Colonic mucosa (tissue), 4 donors: ENCODE measurements at regions of chr7 and their contacts with region 1.

Region 1: GRCh38 chr7:33932832-33933468 is 27.6 kb downstream of the BMPER start:
- DNase-seq: peak; percentile 78
- H3K4me3 ChIP-seq: no peak overlapping the region
- H3K27ac ChIP-seq: no peak overlapping the region
- H3K4me1 ChIP-seq: no peaks in the 10 kb centered on the region
- H3K27me3 ChIP-seq: no peaks in the 10 kb centered on the region
- CTCF ChIP-seq: peak; percentile 84

Region 2: DNA sequence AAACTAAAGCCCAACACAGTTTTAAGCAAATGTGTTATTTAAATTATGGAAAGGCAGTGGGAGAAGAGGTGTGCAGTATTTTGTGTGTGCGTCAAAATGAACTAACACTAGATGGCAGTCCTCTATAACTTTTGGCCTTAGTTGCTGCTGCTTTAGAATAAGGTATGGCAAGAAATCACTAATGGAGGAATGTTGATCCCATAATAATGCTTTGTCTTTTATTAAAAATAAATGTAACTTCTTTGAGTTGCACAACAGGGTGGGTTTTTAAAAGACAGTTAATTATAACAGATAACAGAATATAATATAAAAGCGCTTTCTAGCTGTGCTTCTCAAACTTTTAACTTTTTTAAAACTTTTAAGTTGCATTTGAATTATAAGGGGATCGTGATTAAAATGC is 747.2 kb before region 1 on chr7:
- intact Hi-C with region 1: loop called (anchors 10 kb)
- DNase-seq: no peak
- H3K4me3 ChIP-seq: no peak overlapping the region
- H3K27ac ChIP-seq: no peak overlapping the region
- H3K4me1 ChIP-seq: no peaks in the 10 kb centered on the region
- H3K27me3 ChIP-seq: no peaks in the 10 kb centered on the region
- CTCF ChIP-seq: peak; percentile 45

Region 3: DNA sequence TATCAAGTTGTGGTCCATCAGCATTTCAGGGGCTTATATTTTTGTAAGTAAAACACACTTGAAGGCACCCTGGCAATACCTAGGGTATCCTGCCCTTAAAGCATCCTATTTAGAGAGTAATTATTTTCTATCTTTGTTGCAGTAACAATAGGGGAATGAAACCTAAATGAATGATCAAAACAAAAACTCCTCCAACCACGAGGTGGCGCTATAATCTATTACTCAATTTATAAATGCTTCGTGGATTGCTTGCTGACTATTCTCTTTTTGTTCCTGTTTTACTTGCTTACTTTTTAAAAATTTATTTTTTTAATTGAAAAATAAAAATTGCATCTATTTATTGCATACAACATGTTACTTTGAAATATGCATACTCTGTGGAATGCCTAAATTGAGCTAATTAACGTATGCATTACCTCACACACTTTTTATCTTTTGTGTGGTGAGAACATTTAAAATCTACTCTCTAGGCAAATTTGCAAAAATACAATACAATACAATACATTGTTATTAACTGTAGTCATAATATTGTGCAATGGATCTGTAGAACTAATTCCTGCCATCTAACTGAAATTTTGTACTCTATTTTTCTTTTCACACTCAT is 175.3 kb before region 1 on chr7:
- intact Hi-C with region 1: loop called (anchors 10 kb)
- DNase-seq: peak; percentile 42
- H3K4me3 ChIP-seq: no peak overlapping the region
- H3K27ac ChIP-seq: no peak overlapping the region
- H3K4me1 ChIP-seq: peaks cover 4% of the 10 kb centered on the region
- H3K27me3 ChIP-seq: no peaks in the 10 kb centered on the region
- CTCF ChIP-seq: no peak

Region 4: DNA sequence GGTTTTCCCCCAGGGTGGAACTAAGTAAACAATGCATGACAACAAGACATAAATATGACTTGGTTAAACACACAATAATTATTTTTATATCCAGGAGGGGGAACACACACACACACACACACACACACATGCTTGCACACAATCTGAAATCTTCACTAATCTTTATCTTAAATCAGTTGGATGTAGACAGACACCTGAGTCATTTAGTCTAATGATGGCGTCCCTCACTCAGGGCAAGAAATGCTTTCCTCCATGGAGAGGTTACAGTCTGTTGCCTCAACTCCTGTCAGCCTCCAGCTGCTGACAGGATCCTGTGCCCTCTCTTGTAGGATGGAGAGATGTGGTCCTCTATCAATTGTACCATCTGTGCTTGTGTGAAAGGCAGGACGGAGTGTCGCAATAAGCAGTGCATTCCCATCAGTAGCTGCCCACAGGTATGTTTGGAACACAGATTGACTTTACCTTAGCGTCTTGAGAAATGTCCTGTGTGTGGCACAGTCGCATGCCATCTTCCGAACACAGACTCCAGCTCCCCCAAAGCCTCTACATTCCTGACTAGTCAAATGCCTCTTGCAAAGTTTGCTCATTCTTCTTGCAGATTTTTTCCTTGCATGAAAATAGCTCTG is 124.9 kb after region 1 on chr7:
- intact Hi-C with region 1: no loop called
- DNase-seq: no peak
- H3K4me3 ChIP-seq: no peak overlapping the region
- H3K27ac ChIP-seq: no peak overlapping the region
- H3K4me1 ChIP-seq: no peaks in the 10 kb centered on the region
- H3K27me3 ChIP-seq: no peaks in the 10 kb centered on the region
- CTCF ChIP-seq: no peak